ENCODE measurements at regions of chr11 and their contacts with region 1.

Region 1: GRCh38 chr11:35822815-35823495 is 120.9 kb upstream of the LDLRAD3 start:
- DNase-seq: no peak
- ATAC-seq: no peak
- H3K4me3 ChIP-seq: no peak overlapping the region
- H3K27ac ChIP-seq: no peak overlapping the region
- H3K4me1 ChIP-seq: peaks cover 3 to 28% of the 10 kb centered on the region in 2 experiments; a peak in 3 of 4 replicates
- H3K27me3 ChIP-seq: no peaks in the 10 kb centered on the region
- CTCF ChIP-seq: no peak
- POLR2A ChIP-seq: no peak
- RAD21 ChIP-seq: no peak

Region 2: GRCh38 chr11:35617687-35618496 is 205.1 kb before region 1 on chr11 and contains the start of gene FJX1:
- CTCF ChIA-PET with region 1: interaction called, 22 read pairs
- POLR2A ChIA-PET with region 1: interaction called, 3 read pairs
- RAD21 ChIA-PET with region 1: interaction called in 1 of 2 experiments, 3 read pairs
- intact Hi-C with region 1: loop called (anchors 2 kb)
- DNase-seq: no peak
- ATAC-seq: peak; percentile 65
- H3K4me3 ChIP-seq: peak within 1 kb of the TSS; percentile 49 to 60
- H3K27ac ChIP-seq: peak within 1 kb of the TSS; percentile 76
- H3K4me1 ChIP-seq: peaks cover 13 to 59% of the 10 kb centered on the region in 2 experiments; a peak in 3 of 4 replicates
- H3K27me3 ChIP-seq: 0 out of 2 replicates have a peak, but pooled peaks cover 4% of the 10 kb centered on the region
- CTCF ChIP-seq: no peak
- POLR2A ChIP-seq: peak; percentile 4
- RAD21 ChIP-seq: no peak
- total RNA-seq, gene FJX1: 13.7 TPM

Region 3: GRCh38 chr11:35810019-35810645 is 12.8 kb before region 1 on chr11:
- CTCF ChIA-PET with region 1: interaction called, 36 read pairs
- POLR2A ChIA-PET with region 1: no interaction called
- RAD21 ChIA-PET with region 1: no interaction called
- intact Hi-C with region 1: no loop called
- DNase-seq: no peak
- ATAC-seq: no peak
- H3K4me3 ChIP-seq: no peak overlapping the region
- H3K27ac ChIP-seq: no peak overlapping the region
- H3K4me1 ChIP-seq: no peaks in the 10 kb centered on the region
- H3K27me3 ChIP-seq: no peaks in the 10 kb centered on the region
- CTCF ChIP-seq: no peak
- POLR2A ChIP-seq: no peak
- RAD21 ChIP-seq: no peak

Region 4: GRCh38 chr11:36041988-36042611 is 219.1 kb after region 1 on chr11:
- CTCF ChIA-PET with region 1: interaction called, 14 read pairs
- POLR2A ChIA-PET with region 1: no interaction called
- RAD21 ChIA-PET with region 1: no interaction called
- intact Hi-C with region 1: no loop called
- DNase-seq: no peak
- ATAC-seq: peak; percentile 73
- H3K4me3 ChIP-seq: no peak overlapping the region
- H3K27ac ChIP-seq: no peak overlapping the region
- H3K4me1 ChIP-seq: no peaks in the 10 kb centered on the region
- H3K27me3 ChIP-seq: no peaks in the 10 kb centered on the region
- CTCF ChIP-seq: peak; percentile 33 to 52 (median 33); a peak in 4 of 6 replicates
- POLR2A ChIP-seq: no peak
- RAD21 ChIP-seq: peak; percentile 54

Region 5: GRCh38 chr11:36149538-36150242 is 326.7 kb after region 1 on chr11:
- CTCF ChIA-PET with region 1: interaction called, 23 read pairs
- POLR2A ChIA-PET with region 1: no interaction called
- RAD21 ChIA-PET with region 1: interaction called in 1 of 2 experiments, 4 read pairs
- intact Hi-C with region 1: loop called (anchors 1 kb)
- DNase-seq: peak; percentile 99
- ATAC-seq: peak; percentile 93
- H3K4me3 ChIP-seq: peak overlapping the region in 1 of 2 experiments; percentile 33; a peak in 2 of 4 replicates
- H3K27ac ChIP-seq: peak overlapping the region; percentile 81
- H3K4me1 ChIP-seq: peaks cover 22 to 45% of the 10 kb centered on the region in 2 experiments
- H3K27me3 ChIP-seq: no peaks in the 10 kb centered on the region
- CTCF ChIP-seq: peak; percentile 73 to 83 (median 80)
- POLR2A ChIP-seq: no peak
- RAD21 ChIP-seq: peak; percentile 83

Region 6: GRCh38 chr11:36478700-36479329 is 655.9 kb after region 1 on chr11:
- CTCF ChIA-PET with region 1: interaction called, 11 read pairs
- POLR2A ChIA-PET with region 1: no interaction called
- RAD21 ChIA-PET with region 1: no interaction called
- intact Hi-C with region 1: no loop called
- DNase-seq: peak; percentile 22
- ATAC-seq: peak; percentile 73
- H3K4me3 ChIP-seq: no peak overlapping the region
- H3K27ac ChIP-seq: no peak overlapping the region
- H3K4me1 ChIP-seq: no peaks in the 10 kb centered on the region
- H3K27me3 ChIP-seq: no peaks in the 10 kb centered on the region
- CTCF ChIP-seq: peak; percentile 40 to 64 (median 62); a peak in 4 of 6 replicates
- POLR2A ChIP-seq: no peak
- RAD21 ChIP-seq: peak; percentile 80

Measured in HCT116 (cell line).